ENCODE measurements at regions of chr19 and their contacts with region 1.

Region 1: DNA sequence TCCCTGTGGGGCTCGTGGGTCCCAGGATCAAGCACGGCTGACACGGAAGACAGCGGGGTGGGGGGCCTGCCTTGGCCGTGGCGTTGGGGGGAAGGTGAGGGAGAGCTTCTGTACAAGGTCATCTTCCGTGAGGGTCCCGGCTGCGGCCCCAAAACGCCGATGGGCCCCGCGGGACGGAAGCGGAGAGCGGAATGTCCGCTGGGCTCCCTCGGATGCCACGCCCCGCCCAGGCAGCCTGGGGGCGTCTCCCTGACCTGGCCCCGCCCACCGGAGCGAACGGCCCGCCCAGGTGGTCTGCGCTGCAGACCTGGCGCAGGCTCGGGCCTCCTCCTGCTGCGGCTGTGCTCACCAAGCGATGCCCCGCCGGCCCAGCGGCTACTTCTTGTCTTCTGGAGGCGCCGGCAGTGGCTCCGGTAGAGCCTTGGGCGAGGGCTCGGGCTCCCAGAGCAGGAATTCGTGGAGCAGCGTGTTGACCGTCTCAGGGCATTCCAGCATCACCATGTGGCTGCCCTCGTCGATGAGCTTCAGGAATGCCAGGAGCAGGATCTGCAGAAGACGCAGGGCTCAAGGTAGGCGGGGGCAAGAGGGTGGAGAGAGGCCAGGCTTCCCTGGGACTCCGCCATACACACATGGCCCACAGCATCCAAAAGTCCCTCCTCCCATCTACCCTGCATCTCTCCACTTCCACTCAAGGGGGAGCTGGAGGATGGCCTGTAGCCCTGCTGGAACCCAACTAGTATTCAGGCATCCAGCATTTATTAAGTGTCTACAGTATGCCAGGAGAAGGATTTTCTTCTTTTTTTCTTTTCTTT is 10.7 kb downstream of the ABHD8 start:
- DNase-seq: peak in 3 of 4 donors; percentile 76 to 94 (median 79)
- ATAC-seq: peak; percentile 97
- H3K4me3 ChIP-seq: peak overlapping the region; percentile 49 to 54
- H3K27ac ChIP-seq: peak overlapping the region in 1 of 2 donors; percentile 43
- H3K4me1 ChIP-seq: peaks cover 3 to 23% of the 10 kb centered on the region in 2 donors
- H3K27me3 ChIP-seq: no peaks in the 10 kb centered on the region
- CTCF ChIP-seq: peak; percentile 54 to 70

Region 2: DNA sequence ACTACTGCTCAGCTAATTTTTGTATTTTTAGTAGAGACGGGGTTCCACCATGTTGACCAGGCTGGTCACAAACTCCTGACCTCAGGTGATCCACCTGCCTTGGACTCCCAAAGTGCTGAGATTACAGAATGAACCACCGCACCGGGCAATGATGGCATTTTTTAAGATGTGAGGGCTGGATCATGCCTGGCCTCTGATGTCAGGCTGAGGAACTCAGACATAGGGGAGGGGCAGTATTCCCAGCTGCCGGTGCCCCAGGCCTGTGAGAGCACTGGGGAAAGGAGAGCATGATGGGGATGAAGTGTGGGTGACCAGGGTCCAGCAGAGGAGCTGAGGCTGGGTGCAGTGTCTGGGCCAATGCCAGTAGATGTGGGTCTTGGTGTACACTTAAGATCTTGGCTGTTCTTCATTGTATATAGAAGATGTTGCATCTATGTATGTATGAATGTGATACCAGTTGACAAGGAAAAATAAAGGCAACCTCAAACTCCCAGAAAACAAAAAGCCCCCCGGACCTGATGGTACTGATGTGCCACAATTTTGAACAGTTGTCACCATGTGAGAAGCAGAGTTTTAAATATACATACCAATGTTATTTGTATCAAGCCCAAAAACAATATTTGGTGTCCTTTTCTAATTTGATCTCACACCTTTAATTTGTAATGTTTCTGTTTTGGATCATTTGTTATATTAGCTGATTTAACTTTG is 88.1 kb after region 1 on chr19:
- intact Hi-C with region 1: loop called in 1 of 2 experiments (anchors 5 kb)
- DNase-seq: no peak
- ATAC-seq: no peak
- H3K4me3 ChIP-seq: no peak overlapping the region
- H3K27ac ChIP-seq: no peak overlapping the region
- H3K4me1 ChIP-seq: peaks cover 0 to 42% of the 10 kb centered on the region in 2 donors
- H3K27me3 ChIP-seq: peaks cover 0 to 19% of the 10 kb centered on the region in 2 donors
- CTCF ChIP-seq: no peak